B cell (primary cell): ENCODE measurements at regions of chr3 and their contacts with region 1.

Region 1: DNA sequence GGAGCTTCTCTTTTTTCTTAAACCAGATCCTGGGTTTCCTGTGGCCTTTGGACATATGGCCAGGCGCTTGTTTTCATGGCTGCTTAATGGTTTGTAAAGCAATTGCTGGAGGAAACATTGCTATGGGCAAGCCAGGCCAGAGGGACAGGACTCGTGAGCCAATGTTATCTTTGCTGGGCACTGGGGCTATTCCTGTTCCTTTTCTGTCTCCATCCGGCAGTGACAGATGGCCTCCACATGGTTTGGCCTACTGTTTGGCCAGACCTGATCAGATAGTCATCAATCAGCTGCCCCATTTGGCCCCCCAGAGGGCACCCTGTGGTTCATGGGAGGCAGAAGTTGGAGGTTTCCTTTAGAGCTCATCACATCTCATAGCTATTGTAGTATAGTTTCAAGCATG is 326.1 kb upstream of the ROPN1 start:
- DNase-seq: no peak
- ATAC-seq: no peak
- H3K4me3 ChIP-seq: no peak overlapping the region
- H3K4me3 Mint-ChIP-seq: no peak overlapping the region
- H3K27ac ChIP-seq: no peak overlapping the region
- H3K27ac Mint-ChIP-seq: no peak overlapping the region
- H3K4me1 ChIP-seq: no peaks in the 10 kb centered on the region
- H3K4me1 Mint-ChIP-seq: peaks cover 3% of the 10 kb centered on the region
- H3K27me3 ChIP-seq: no peaks in the 10 kb centered on the region
- H3K27me3 Mint-ChIP-seq: no peaks in the 10 kb centered on the region
- CTCF ChIP-seq: no peak

Region 2: GRCh38 chr3:124303305-124303910 is 14.6 kb before region 1 on chr3:
- CTCF ChIA-PET with region 1: interaction called, 3 read pairs
- POLR2A ChIA-PET with region 1: interaction called, 12 read pairs
- intact Hi-C with region 1: no loop called
- DNase-seq: no peak
- ATAC-seq: no peak
- H3K4me3 ChIP-seq: no peak overlapping the region
- H3K4me3 Mint-ChIP-seq: no peak overlapping the region
- H3K27ac ChIP-seq: no peak overlapping the region
- H3K27ac Mint-ChIP-seq: no peak overlapping the region
- H3K4me1 ChIP-seq: peaks cover 0 to 6% of the 10 kb centered on the region in 2 donors
- H3K4me1 Mint-ChIP-seq: peaks cover 6% of the 10 kb centered on the region
- H3K27me3 ChIP-seq: peaks cover 0 to 5% (median 0%) of the 10 kb centered on the region in 4 experiments
- H3K27me3 Mint-ChIP-seq: no peaks in the 10 kb centered on the region
- CTCF ChIP-seq: no peak